ENCODE measurements at regions of chr9 and their contacts with region 1.

Region 1: GRCh38 chr9:123282362-123283047 is 14.1 kb upstream of the STRBP start:
- DNase-seq: peak; percentile 87

Region 2: DNA sequence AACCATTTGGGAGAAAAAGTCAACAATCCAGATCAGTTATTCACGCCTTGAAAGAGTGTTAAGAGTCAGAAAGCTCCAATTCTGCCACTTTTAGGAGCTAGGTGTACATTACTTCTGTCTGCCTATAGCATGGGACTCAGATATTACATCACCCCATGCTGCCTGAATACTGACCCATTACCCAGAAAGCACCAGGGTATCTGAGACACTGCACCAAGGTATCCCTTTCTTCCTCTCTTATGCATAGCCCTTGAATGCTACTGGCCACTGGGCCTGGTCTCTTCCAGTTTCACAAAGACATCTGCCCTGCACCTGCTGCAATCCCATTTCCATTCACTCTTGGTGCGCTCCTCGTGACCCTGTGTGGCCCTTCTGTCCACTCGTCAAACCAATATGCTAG is 16.7 kb before region 1 on chr9:
- intact Hi-C with region 1: no loop called
- DNase-seq: no peak

Region 3: DNA sequence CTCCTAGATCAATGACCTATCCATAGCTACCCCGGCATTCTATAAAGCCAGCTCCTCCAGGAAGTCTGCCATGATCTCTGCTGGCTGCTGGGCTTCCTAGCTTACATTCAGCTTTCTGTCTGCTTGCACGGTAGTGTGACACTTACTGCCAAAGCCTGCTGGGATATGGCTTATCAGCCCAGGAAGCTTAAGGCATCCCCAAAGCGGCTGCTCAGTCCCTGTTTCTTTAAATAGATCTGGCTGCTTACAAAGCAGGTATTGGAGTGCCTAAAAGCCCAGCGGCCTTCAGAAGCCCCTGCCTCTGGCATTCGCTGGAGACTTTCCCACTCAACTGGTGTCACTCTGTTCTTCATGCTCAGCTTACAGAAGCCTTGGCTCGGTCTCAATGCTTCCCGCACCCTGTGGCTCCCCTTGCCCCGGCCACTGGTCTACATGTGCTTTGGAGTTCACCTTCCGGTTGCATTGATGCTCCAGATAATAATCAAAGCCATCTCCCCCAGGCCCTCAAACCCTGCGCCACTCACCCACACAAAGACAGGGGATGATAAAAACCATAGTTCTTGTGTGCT is 17.1 kb after region 1 on chr9:
- intact Hi-C with region 1: loop called (anchors 2 kb)
- DNase-seq: no peak

Region 4: DNA sequence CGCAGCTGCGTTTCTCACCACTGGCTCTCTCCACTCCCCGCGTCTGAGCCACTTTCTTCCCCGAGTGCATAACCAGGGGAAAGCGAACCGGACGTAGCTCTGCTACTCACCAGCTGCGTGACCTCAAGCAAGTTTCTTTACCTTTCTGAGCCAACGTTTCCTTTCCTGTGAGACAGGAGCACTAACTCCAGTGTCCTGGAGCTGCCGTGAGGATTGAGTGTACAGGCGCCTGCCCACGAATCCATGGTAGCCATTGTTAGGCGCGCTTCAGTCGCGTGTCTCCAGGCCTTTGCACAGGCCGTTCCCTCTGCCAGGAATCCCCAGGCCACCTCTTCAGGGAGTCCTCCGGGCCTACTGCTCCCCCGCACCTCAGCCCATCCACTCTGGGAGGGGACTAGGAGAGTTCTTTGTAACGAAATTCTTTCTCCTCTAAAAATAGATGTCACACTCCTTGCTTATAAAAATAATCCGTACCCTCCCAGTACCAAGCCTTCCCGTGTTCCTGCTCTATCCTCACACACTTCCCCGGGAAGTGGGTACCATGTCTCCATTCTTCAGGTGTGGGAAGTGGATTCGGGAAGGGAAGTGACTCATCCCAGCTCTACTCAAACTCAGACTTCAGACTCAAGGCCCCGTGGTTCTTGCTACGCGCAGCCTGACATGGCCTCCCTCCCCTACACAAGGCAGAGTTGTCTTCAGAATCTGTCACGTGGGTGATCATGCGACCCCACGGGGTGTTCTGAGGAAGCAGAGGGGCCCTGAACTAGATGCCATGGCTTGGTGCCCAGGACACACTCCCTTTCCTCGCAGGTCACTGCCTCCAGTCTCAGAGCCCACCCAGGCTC is 57.4 kb after region 1 on chr9:
- intact Hi-C with region 1: loop called (anchors 5 kb)
- DNase-seq: no peak

Region 5: DNA sequence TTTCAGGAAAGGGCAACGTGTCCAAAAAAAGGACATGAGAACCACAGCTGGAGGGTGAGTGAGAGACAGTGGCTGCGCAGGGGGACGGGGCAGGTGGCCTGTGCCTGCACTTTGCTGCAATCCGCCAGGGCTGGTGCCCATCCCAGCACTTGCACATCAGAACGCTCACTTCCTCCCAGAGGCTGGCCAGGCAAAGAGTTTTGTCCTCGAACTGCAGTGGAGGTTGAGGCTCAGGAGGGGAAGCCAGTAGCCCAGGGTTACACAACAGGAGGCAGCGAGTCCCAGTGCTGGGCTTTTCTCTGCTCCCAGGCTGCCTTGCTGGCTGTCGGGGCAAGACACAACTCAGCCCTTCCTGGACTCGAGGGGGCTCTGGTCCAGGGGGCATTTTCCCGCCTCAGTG is 106.6 kb after region 1 on chr9:
- intact Hi-C with region 1: no loop called
- DNase-seq: no peak